ENCODE measurements at regions of chr16 and their contacts with region 1.

Region 1: DNA sequence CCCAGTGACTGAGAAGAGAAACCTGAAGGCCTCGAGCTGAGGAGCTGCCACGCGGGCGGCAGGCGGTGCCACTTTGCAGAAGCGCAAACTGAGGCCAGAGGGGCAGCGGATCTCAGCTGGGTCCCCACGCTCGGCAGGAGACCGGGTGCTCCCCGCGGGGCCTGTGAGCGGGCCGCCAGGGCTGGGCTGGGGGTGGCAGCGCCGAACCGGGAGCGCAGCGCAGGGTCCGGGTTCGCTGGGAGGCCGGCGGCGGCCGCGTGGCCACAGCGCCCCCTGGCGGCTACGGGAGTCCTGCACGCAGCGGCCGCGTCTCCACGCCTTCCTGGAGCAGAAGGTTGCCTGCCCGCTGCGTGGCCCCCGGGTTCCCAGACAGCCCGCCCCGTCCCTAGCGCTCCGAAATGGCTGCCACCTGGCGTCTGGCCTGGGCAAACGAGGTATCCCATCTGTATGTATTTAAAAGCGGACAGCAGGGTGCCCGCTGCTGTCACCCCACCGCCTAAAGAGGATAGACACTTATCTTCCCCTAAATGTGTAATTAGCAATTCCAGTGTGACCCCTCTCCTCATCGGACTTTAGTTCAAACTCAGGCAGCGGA is 96.1 kb upstream of the CDH5 start:
- DNase-seq: peak; percentile 90
- H3K4me3 ChIP-seq: no peak overlapping the region
- H3K27ac ChIP-seq: peak overlapping the region; percentile 78
- H3K4me1 ChIP-seq: peaks cover 50% of the 10 kb centered on the region
- H3K27me3 ChIP-seq: no peaks in the 10 kb centered on the region
- CTCF ChIP-seq: peak; percentile 81

Region 2: DNA sequence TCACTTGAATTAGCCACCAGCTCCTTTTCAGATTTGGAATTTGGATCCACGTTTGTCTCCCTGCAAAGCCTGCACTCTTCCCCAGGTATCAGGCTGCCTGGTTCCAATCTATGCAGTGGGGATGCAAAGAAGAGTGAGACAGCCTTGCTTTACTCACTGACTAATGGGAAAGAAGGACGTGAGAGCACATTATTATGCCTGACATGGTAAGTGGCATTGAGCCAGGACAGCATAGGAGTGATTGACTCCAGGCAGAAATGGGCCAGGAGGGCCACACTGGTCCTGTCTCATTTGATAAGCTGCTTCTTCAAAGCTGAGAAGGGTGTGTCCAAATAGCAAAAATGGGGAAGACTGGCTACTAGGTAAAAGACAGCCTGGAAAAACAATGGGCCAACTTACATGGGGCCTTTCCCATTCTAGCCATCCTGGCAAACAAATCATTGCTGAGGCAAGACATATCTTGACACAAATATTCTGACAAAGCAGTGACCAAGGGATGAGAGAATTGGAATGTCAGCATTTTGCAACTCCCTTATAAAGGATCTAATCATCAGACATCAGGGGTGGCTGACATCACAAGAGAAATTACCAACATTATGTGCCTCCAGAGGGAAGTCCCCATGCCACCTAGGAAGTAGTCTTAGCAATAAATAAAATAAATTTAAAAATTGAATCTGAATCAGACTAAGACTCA is 1187.1 kb before region 1 on chr16:
- CTCF ChIA-PET with region 1: no interaction called
- POLR2A ChIA-PET with region 1: no interaction called
- intact Hi-C with region 1: no loop called
- DNase-seq: no peak
- H3K4me3 ChIP-seq: no peak overlapping the region
- H3K27ac ChIP-seq: no peak overlapping the region
- H3K4me1 ChIP-seq: peaks cover 4% of the 10 kb centered on the region
- H3K27me3 ChIP-seq: no peaks in the 10 kb centered on the region
- CTCF ChIP-seq: no peak

Region 3: DNA sequence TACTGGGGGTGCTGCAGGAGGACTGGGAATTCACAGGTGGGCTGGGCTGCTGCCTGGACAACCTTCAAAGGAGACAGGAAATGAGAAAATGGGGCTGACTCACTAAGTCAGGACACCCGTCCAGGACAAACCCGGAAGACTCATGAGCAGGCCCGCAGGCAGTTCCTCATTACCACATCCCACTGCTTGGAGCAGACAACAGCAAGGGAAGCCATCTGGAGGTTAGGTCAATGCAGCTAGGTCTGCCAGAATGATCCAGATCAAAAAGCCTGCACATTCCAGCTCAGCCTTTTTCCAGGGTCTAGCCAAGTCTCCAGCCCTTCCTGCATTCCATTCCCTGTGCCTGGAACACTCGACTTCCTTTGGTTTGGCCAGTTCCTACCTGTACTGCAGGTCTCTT is 612.1 kb before region 1 on chr16:
- CTCF ChIA-PET with region 1: no interaction called
- POLR2A ChIA-PET with region 1: no interaction called
- intact Hi-C with region 1: loop called (anchors 10 kb)
- DNase-seq: peak; percentile 76
- H3K4me3 ChIP-seq: no peak overlapping the region
- H3K27ac ChIP-seq: no peak overlapping the region
- H3K4me1 ChIP-seq: peaks cover 40% of the 10 kb centered on the region
- H3K27me3 ChIP-seq: no peaks in the 10 kb centered on the region
- CTCF ChIP-seq: no peak

Region 4: DNA sequence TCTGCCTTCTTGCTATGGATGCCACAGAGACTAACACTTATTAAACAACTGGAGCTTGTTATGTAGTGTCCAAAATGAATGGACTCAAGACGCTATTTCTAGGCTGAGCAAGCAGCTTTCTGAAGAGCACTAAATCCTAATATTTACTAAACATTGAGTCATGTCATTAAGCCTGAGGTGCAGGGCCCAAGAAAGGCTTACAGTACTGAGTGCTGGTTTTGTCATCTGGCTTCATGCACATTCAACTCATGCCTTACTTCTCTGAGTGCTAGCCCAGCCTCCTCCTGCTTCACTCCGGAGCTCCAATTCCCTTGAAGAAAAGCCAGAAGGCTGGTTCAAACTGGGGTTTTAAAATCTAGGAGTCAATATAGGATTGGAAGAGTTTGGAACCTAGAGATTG is 267.2 kb before region 1 on chr16:
- CTCF ChIA-PET with region 1: no interaction called
- POLR2A ChIA-PET with region 1: no interaction called
- intact Hi-C with region 1: no loop called
- DNase-seq: no peak
- H3K4me3 ChIP-seq: no peak overlapping the region
- H3K27ac ChIP-seq: no peak overlapping the region
- H3K4me1 ChIP-seq: no peaks in the 10 kb centered on the region
- H3K27me3 ChIP-seq: no peaks in the 10 kb centered on the region
- CTCF ChIP-seq: no peak

Region 5: DNA sequence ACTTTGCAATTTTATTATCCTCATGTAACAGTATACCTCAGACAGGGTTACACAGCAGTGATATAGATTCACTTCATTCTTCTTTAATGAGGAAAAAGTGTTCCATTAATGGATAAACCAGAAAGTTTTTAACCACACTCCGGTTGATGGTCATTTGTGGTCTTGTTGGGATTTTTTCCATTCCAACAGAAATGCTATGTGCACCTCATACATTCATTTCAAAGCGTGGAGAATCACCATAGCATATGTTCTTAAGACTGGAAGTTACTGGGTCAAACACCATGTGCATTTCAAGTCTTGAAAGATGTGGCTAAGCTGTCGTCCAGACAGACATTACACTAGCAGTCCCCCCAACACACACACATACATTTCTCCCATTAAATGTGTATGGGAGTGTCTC is 149.8 kb before region 1 on chr16:
- CTCF ChIA-PET with region 1: no interaction called
- POLR2A ChIA-PET with region 1: no interaction called
- intact Hi-C with region 1: no loop called
- DNase-seq: no peak
- H3K4me3 ChIP-seq: no peak overlapping the region
- H3K27ac ChIP-seq: no peak overlapping the region
- H3K4me1 ChIP-seq: no peaks in the 10 kb centered on the region
- H3K27me3 ChIP-seq: no peaks in the 10 kb centered on the region
- CTCF ChIP-seq: no peak

Region 6: DNA sequence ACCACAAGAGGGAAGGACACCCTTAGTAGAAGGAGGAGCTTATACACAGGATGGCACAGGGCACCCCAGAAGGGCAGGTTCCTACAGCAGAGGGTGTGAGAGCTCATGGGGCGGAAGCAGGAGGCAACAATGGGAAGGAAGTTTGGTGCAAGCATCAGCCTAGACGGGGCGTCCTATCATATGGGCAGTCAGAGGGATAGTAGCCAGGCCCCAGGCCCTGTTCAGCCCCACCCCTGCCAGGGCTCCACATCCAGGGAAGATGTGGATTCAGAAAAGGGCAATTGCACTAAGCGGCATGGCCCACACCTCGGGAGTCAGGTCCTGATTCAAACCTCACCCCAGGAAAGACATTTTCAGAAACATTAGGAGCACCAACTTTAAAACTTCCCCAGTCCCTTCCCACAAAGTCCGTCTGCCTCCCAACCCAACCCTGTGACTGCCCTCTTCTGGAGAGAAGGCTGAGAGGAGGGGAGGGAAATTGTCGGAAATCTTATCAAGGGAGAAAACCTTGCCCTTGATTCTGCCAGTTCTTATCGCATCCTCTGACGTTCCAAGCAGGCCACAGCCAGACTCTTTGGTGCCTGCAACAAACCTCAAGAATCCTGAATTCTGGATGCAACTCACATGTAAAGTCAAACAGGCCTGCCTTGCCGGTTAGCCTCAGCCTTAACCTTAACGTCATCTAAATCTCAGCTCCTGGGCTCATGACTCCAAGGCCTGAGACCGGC is 102.7 kb before region 1 on chr16:
- CTCF ChIA-PET with region 1: no interaction called
- POLR2A ChIA-PET with region 1: no interaction called
- intact Hi-C with region 1: no loop called
- DNase-seq: peak; percentile 46
- H3K4me3 ChIP-seq: no peak overlapping the region
- H3K27ac ChIP-seq: no peak overlapping the region
- H3K4me1 ChIP-seq: no peaks in the 10 kb centered on the region
- H3K27me3 ChIP-seq: no peaks in the 10 kb centered on the region
- CTCF ChIP-seq: peak; percentile 56

Region 7: GRCh38 chr16:66344533-66345145 is 74.2 kb after region 1 on chr16:
- CTCF ChIA-PET with region 1: no interaction called
- POLR2A ChIA-PET with region 1: no interaction called
- intact Hi-C with region 1: loop called (anchors 10 kb)
- DNase-seq: peak; percentile 58
- H3K4me3 ChIP-seq: no peak overlapping the region
- H3K27ac ChIP-seq: no peak overlapping the region
- H3K4me1 ChIP-seq: no peaks in the 10 kb centered on the region
- H3K27me3 ChIP-seq: no peaks in the 10 kb centered on the region
- CTCF ChIP-seq: peak; percentile 90

Measured in A673 (cell line).